Activated CD8-positive, alpha-beta T cell treated with anti-CD3 and anti-CD28 coated beads for 36 hours (primary cell): ENCODE measurements at regions of chr10 and their contacts with region 1.

Region 1: GRCh38 chr10:32298054-32298812 is 48.7 kb downstream of the EPC1 start:
- DNase-seq: no peak
- ATAC-seq: no peak
- H3K4me3 Mint-ChIP-seq: no peak overlapping the region
- H3K27ac Mint-ChIP-seq: peak overlapping the region; percentile 55
- H3K4me1 Mint-ChIP-seq: peaks cover 50% of the 10 kb centered on the region
- H3K27me3 Mint-ChIP-seq: no peaks in the 10 kb centered on the region
- CTCF ChIP-seq: no peak

Region 2: GRCh38 chr10:32338262-32338661 is 40.0 kb after region 1 on chr10:
- CTCF ChIA-PET with region 1: interaction called, 13 read pairs
- POLR2A ChIA-PET with region 1: interaction called, 3 read pairs
- intact Hi-C with region 1: no loop called
- DNase-seq: no peak
- ATAC-seq: no peak
- H3K4me3 Mint-ChIP-seq: no peak overlapping the region
- H3K27ac Mint-ChIP-seq: peak overlapping the region; percentile 62
- H3K4me1 Mint-ChIP-seq: peaks cover 89% of the 10 kb centered on the region
- H3K27me3 Mint-ChIP-seq: no peaks in the 10 kb centered on the region
- CTCF ChIP-seq: no peak